Gastrocnemius medialis (tissue), 4 donors: ENCODE measurements at regions of chr2 and their contacts with region 1.

Region 1: DNA sequence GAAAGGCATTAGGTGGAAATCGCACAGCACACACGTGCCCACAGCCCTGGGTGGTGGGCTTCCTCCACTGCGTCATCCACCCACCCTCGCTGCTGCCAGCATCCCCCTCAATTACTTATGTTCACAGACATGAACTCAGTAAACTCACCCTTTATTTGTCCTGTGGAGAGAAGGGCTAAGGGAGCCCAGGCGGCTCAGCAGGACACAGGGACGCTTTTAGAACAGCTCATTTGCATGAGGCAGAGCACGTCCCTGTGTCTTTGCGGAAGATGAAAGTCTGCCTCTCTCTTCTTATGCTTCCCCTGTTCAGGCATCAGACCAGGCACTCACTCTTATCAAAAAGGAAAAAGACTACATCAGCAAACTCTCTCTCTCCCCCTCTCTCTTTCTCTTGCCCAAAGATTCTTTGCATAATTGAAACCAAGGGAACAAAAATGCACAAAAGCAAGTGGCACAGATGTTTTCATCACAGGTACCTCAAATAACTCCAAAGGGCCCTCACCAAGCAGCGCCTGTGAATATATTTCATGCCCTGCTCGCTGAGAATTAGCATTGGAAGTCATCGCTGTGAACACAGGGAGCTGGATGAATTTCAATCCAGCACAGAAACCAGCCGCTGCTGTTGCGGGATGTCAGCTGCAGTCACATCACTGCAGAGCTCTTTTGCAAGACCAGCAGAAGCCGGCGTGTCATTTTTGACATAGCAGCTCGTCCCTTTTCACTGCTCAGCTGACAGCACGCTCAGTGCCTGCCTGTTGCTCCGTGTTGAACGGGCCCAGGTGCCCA is 376.3 kb upstream of the MYT1L start:
- DNase-seq: no peak
- ATAC-seq: no peak
- H3K4me3 ChIP-seq: no peak overlapping the region
- H3K27ac ChIP-seq: no peak overlapping the region
- H3K4me1 ChIP-seq: no peaks in the 10 kb centered on the region
- H3K27me3 ChIP-seq: no peaks in the 10 kb centered on the region
- CTCF ChIP-seq: no peak
- POLR2A ChIP-seq: no peak

Region 2: GRCh38 chr2:2656115-2657011 is 51.0 kb before region 1 on chr2:
- in situ Hi-C with region 1: no loop called
- intact Hi-C with region 1: loop called (anchors 2 kb)
- DNase-seq: no peak
- ATAC-seq: no peak
- H3K4me3 ChIP-seq: peak overlapping the region in 1 of 4 donors; percentile 2
- H3K27ac ChIP-seq: no peak overlapping the region
- H3K4me1 ChIP-seq: peaks cover 3 to 6% of the 10 kb centered on the region in 2 donors
- H3K27me3 ChIP-seq: no peaks in the 10 kb centered on the region
- CTCF ChIP-seq: no peak
- POLR2A ChIP-seq: no peak